ENCODE measurements at regions of chr4 and their contacts with region 1.

Region 1: DNA sequence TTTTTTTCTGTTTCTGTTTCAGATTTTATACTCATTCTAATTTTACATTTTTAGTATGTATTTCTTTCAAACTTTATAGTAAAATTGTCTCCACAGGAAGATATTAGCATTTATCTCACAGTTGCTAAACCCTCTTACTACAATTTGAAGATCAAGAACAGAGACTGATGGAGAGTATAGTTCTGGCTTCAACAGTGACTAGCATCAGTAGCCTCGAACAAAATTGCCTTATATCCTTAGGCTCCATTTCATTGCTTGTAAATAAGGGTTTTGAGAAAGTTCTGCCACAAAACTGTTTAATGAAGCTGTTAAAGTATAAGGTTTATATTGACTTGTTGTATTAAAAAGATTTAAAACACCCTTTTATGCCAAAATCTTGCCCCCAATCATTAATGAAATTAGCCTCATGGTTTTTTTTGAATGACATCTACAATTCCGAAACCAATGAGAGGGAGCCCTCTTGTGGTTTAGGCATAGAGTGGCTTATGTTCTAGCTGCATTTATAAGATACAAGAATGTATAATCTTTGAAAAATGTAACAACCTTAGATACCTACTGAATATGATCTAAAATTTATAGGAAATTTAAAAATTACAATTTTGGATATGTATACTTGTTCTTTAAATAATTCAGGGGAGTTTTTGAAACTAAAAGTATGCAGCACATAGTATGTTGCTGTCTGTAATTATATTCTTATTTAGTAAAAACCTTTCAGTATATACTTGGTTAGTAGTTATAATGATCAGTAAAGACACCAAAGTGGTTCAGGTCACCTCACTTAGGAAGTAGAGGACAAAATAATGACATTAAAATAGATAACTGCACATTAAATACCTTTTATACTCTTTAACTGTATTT is 109.8 kb upstream of the HPGD start:
- DNase-seq: no peak

Region 2: DNA sequence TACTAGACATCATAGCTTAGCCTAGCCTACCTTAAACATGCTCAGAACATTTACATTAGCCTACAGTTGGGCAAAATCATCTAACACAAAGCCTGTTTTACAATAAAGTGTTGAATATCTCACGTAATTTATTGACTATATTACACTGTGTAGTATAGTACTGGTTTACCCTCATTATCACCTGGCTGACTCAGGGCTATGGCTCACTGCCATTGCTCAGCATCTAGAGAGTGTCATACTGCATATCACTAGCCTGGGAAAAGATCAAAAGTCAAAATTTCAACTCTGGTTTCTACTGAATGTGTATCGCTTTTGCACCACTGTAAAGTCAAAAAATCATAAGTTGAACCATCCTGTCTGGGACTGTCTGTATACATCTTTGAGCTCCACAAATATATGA is 269.8 kb before region 1 on chr4:
- intact Hi-C with region 1: loop called in 1 of 2 experiments (anchors 5 kb)
- DNase-seq: no peak

Region 3: GRCh38 chr4:174373821-174374220 is 258.3 kb before region 1 on chr4:
- intact Hi-C with region 1: loop called in 1 of 2 experiments (anchors 5 kb)
- DNase-seq: no peak

Region 4: DNA sequence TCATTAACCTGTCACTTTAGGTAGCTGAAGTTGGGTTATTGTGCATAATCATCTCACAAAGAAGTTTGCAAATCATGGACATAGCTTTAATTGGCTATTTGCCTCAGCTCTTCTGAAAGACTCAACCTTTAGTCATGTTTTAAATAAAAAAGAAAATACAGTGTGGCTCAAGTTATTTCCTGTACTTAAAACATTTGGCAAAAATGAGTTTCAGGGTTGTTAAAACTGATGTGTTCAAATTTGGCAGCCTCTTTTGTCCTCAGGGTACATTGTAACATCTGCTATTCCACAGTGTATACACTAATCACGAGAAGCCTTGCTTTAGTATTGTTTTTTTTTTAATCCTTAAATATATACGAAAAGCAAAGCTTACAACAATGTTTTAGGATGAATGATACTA is 78.3 kb before region 1 on chr4:
- intact Hi-C with region 1: no loop called
- DNase-seq: no peak